ENCODE measurements at regions of chr12 and their contacts with region 1.

Region 1: DNA sequence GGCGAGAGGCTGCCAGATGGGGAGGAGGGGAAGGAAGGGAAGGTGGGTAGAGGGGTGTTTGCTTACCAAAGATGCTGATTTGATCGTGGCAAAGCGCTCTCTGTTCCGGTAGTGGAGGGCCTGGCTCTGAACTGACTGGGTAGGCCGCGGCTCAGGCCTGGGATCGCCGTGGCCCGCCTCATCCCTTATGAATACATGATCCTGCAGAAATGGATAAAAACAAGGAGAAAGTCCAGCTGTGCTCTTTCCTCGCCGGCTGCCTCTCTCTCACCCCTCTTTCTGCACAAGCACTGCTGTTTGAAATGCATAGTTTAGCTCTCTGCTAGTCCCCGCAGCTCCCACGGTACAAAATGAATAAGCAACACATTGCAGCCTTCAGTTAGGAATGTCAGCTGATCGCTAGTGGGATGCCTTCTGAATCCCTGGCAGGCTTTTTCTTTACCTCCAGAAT is 53.8 kb downstream of the PEBP1 start:
- DNase-seq: no peak

Region 2: DNA sequence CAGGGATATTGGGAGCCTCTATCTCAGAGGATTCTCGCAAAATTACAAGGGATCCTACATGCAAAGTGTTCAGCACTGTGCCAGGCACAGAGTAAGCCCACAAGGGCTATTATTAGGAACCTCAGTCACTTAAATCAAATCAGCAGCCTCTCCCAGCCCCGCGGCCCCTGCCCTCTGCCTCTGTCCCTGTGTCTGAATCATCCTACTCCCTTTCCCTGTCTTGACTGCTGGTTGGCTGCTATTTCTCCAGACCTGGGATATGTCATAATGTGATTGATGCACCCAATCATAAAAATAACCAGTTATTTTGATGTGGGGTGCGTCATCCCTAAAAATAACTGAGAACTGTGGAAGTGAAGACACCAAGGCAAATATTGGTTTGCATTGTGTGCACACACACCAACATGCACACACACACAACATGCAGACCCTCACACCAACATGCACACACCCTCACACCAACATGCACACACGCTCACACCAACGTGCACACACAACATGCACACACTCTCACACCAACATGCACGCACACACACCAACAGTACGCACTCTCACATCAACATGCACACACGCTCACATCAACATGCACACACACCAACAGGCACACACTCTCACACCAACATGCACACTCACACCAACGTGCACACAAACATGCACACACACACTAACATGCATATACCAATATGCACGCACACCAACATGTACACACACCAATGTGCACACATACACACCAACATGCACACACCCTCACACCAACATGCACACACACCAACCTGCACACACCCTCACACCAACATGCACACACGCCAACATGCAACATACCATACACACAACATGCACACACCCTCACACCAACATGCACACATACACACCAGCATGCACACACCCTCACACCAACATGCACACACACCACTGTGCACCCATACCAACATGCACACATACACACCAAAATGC is 397.0 kb before region 1 on chr12:
- in situ Hi-C with region 1: no loop called
- DNase-seq: no peak

Region 3: GRCh38 chr12:118372541-118373495 is 183.1 kb after region 1 on chr12 and contains the start of gene TAOK3:
- in situ Hi-C with region 1: loop called (anchors 10 kb)
- DNase-seq: peak; percentile 100